GM12878 (cell line): ENCODE measurements at regions of chr1 and their contacts with region 1.

Region 1: GRCh38 chr1:56803561-56804156 is 15.5 kb downstream of the FYB2 start:
- DNase-seq: no peak
- ATAC-seq: peak; percentile 94
- H3K4me3 ChIP-seq: no peak overlapping the region
- H3K27ac ChIP-seq: no peak overlapping the region
- H3K4me1 ChIP-seq: no peaks in the 10 kb centered on the region
- H3K27me3 ChIP-seq: no peaks in the 10 kb centered on the region
- CTCF ChIP-seq: peak; percentile 63 to 74 (median 73)
- EP300 ChIP-seq: no peak
- POLR2A ChIP-seq: no peak
- RAD21 ChIP-seq: peak; percentile 30

Region 2: GRCh38 chr1:56758135-56758534 is 45.5 kb before region 1 on chr1:
- CTCF ChIA-PET with region 1: interaction called, 15 read pairs
- POLR2A ChIA-PET with region 1: no interaction called
- RAD21 ChIA-PET with region 1: no interaction called
- SMC1A ChIA-PET with region 1: interaction called, 10 read pairs
- in situ Hi-C with region 1: no loop called
- intact Hi-C with region 1: loop called (anchors 1 kb)
- DNase-seq: no peak
- ATAC-seq: peak; percentile 78
- H3K4me3 ChIP-seq: no peak overlapping the region
- H3K27ac ChIP-seq: no peak overlapping the region
- H3K4me1 ChIP-seq: no peaks in the 10 kb centered on the region
- H3K27me3 ChIP-seq: no peaks in the 10 kb centered on the region
- CTCF ChIP-seq: peak in 2 of 3 experiments; percentile 14 to 34; a peak in 3 of 6 replicates
- EP300 ChIP-seq: no peak
- POLR2A ChIP-seq: no peak
- RAD21 ChIP-seq: 0 out of 2 replicates have a peak, but pooled peaks have one; percentile 17

Region 3: GRCh38 chr1:56877973-56878372 is 74.3 kb after region 1 on chr1:
- CTCF ChIA-PET with region 1: no interaction called
- POLR2A ChIA-PET with region 1: no interaction called
- RAD21 ChIA-PET with region 1: no interaction called
- SMC1A ChIA-PET with region 1: no interaction called
- in situ Hi-C with region 1: no loop called
- intact Hi-C with region 1: no loop called
- DNase-seq: no peak
- ATAC-seq: no peak
- H3K4me3 ChIP-seq: no peak overlapping the region
- H3K27ac ChIP-seq: no peak overlapping the region
- H3K4me1 ChIP-seq: no peaks in the 10 kb centered on the region
- H3K27me3 ChIP-seq: no peaks in the 10 kb centered on the region; a peak in 1 of 4 replicates
- CTCF ChIP-seq: no peak
- EP300 ChIP-seq: no peak
- POLR2A ChIP-seq: no peak
- RAD21 ChIP-seq: no peak